ENCODE measurements at regions of chr3 and their contacts with region 1.

Region 1: DNA sequence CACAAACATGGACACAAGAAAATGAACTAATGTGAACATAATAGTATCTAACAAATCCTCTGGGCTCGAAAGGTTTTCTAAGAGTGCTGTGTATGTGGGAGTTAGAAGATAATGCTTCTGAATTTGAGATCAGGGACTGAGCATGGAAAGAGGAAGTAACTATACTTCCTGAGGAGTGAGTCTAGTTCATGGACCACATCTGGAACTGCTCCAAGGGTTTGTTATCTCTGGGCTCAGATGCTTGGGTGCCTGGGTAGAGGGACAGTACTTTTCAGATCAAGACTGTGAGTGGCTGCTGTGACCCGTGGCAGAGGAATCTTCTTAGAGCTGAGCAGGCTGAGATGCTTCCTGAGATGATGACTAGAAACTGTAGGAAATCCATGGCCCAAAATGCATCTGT is 28.5 kb downstream of the TBC1D23 start:
- DNase-seq: no peak
- ATAC-seq: no peak
- H3K4me3 ChIP-seq: no peak overlapping the region
- H3K4me3 Mint-ChIP-seq: no peak overlapping the region
- H3K27ac ChIP-seq: no peak overlapping the region
- H3K27ac Mint-ChIP-seq: no peak overlapping the region
- H3K4me1 ChIP-seq: no peaks in the 10 kb centered on the region
- H3K4me1 Mint-ChIP-seq: no peaks in the 10 kb centered on the region
- H3K27me3 ChIP-seq: no peaks in the 10 kb centered on the region
- H3K27me3 Mint-ChIP-seq: no peaks in the 10 kb centered on the region
- CTCF ChIP-seq: no peak

Region 2: GRCh38 chr3:100277255-100277800 is 12.0 kb before region 1 on chr3:
- CTCF ChIA-PET with region 1: no interaction called
- POLR2A ChIA-PET with region 1: no interaction called
- intact Hi-C with region 1: no loop called
- DNase-seq: no peak
- ATAC-seq: no peak
- H3K4me3 ChIP-seq: no peak overlapping the region
- H3K4me3 Mint-ChIP-seq: no peak overlapping the region
- H3K27ac ChIP-seq: no peak overlapping the region
- H3K27ac Mint-ChIP-seq: no peak overlapping the region
- H3K4me1 ChIP-seq: no peaks in the 10 kb centered on the region
- H3K4me1 Mint-ChIP-seq: peaks cover 34% of the 10 kb centered on the region
- H3K27me3 ChIP-seq: no peaks in the 10 kb centered on the region
- H3K27me3 Mint-ChIP-seq: no peaks in the 10 kb centered on the region
- CTCF ChIP-seq: no peak

Region 3: GRCh38 chr3:100306695-100307094 is 17.4 kb after region 1 on chr3:
- CTCF ChIA-PET with region 1: no interaction called
- POLR2A ChIA-PET with region 1: no interaction called
- intact Hi-C with region 1: loop called in 1 of 2 experiments (anchors 1 kb)
- DNase-seq: no peak
- ATAC-seq: no peak
- H3K4me3 ChIP-seq: no peak overlapping the region
- H3K4me3 Mint-ChIP-seq: no peak overlapping the region
- H3K27ac ChIP-seq: no peak overlapping the region
- H3K27ac Mint-ChIP-seq: no peak overlapping the region
- H3K4me1 ChIP-seq: no peaks in the 10 kb centered on the region
- H3K4me1 Mint-ChIP-seq: no peaks in the 10 kb centered on the region
- H3K27me3 ChIP-seq: no peaks in the 10 kb centered on the region
- H3K27me3 Mint-ChIP-seq: no peaks in the 10 kb centered on the region
- CTCF ChIP-seq: no peak

Measured in CD4-positive, alpha-beta T cell (primary cell).